ENCODE measurements at regions of chr12 and their contacts with region 1.

Region 1: DNA sequence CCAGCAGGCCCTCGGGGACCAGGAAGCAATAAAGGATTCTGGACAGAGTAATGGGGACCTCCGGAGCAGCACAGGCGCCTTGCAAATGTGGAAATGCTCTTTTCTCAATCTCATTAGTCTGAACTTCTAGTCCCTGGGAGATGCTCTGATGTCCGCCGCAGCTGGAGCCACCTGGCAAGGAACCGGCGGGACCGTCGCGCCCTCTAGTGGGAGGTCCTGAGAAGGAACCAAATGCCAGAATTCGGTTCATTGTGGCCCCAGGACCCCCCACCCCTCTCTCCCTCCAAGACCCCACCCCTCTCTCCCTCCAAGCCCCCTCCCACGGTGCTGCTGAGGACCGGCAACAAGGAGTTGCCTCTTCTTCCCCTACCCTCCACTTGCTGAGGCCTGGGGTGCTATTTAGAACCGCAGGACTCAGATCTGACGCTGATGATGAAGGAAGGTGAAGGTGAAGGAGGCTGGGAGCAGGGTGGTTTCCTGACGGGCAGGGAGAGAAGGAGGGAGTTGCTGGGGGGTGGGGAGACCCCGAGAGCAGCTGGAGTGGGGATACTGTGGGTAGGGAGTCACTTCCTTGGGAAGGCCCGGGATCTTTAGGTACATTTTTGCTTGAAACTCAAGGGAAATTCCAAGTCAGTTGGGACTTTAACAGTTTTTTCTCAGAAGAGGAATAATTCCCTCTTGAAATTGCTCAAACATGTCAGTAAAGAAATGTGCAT is 42.5 kb downstream of the SMIM41 start:
- DNase-seq: peak; percentile 87
- ATAC-seq: peak; percentile 32

Region 2: DNA sequence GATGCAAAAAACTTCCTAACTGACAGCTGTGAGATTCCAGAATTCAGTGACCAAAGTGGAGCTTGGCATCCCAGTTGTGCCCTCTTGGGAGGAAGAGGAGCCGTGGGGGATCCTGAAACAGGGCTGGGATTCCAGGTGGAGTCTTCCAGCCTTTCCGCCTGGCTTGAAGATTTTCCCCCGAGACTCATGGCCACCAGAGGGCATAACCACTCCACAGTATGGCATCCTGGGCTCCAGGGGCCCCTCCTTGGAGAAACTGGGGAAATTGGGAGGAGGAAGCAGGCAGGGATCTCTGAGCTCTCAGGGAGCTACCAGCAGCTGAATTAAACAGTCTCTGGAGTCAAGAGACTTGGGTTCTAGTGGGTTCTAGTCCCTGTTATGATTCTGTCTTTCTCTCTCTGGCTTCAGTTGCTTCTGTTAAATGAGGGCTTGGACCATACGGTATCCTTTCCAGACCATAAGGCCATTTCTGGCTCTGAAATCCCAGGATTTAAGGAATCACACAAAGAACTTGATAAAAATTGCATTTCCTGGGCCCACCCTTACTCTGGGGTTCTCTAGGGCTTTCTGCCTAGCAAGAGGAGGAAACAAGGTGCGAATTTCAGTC is 117.8 kb before region 1 on chr12:
- intact Hi-C with region 1: loop called (anchors 5 kb)
- DNase-seq: no peak
- ATAC-seq: no peak

Region 3: DNA sequence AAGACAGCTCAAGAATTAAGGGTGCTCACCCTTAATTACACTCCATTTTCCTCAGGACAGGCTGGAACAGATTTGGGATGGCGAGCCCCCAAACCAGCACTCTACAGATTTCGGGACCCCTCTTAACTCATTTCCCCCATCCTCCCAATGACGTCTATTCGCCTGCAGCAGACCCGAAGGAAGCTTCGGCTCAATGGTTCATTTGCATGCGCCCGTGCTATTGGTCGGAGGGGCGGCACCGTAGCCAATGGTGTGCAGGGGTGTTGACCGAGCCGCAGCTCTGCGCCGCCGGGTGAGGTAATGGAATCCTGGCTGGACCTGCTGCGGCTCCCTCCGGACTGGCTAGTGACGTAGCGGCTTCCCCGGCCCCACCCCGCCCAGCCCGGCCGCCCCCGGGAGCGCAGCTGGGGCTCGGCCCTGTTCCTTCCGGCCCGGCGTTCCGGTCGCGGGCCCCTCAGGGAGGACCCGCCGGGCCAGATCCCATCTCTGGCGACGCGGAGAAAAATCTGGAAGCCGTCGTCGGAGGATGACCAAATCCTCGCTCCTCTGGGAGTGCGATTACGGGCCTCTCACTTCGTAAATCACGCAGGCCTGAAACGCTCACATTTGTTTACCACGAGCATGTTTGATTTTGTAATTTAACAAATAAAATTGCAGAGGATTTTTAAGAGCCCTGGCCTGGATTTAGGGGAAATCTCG is 89.0 kb before region 1 on chr12:
- intact Hi-C with region 1: loop called (anchors 2 kb)
- DNase-seq: peak; percentile 99
- ATAC-seq: peak; percentile 93

Region 4: GRCh38 chr12:52082988-52083637 is 38.9 kb before region 1 on chr12:
- intact Hi-C with region 1: loop called (anchors 2 kb)
- DNase-seq: no peak
- ATAC-seq: peak; percentile 46

Region 5: GRCh38 chr12:52147367-52147972 is 25.5 kb after region 1 on chr12:
- intact Hi-C with region 1: loop called (anchors 1 kb)
- DNase-seq: peak; percentile 87
- ATAC-seq: peak; percentile 63

Region 6: DNA sequence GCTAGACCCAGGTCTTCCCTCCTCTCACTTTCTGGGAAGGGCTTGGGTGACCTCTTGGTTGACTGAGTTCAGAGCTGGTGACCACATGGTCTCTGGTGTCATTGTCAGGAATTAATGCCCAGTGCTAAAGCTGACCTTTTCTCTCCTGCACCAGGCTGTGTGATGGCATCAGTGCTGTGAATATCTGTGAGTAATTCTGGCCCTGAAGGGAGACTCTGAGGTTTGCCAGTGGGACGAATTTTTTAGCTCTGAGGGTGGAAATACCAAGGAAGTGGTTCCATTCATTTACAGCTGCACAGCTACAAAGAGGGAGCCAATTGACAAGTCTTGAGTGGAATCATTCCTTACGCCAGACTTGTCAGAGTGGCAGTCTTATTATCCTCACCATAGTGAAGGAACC is 146.2 kb after region 1 on chr12:
- intact Hi-C with region 1: no loop called
- DNase-seq: no peak
- ATAC-seq: no peak